HepG2 (cell line): ENCODE measurements at regions of chr10 and their contacts with region 1.

Region 1: GRCh38 chr10:67306588-67307205 is 380.9 kb downstream of the LRRTM3 start:
- DNase-seq: peak; percentile 27
- ATAC-seq: 0 out of 3 replicates have a peak, but pooled peaks have one; percentile 43
- H3K4me3 ChIP-seq: no peak overlapping the region
- H3K27ac ChIP-seq: no peak overlapping the region
- H3K4me1 ChIP-seq: no peaks in the 10 kb centered on the region
- H3K27me3 ChIP-seq: no peaks in the 10 kb centered on the region
- CTCF ChIP-seq: peak; percentile 43
- EP300 ChIP-seq: no peak
- POLR2A ChIP-seq: no peak
- RAD21 ChIP-seq: no peak

Region 2: DNA sequence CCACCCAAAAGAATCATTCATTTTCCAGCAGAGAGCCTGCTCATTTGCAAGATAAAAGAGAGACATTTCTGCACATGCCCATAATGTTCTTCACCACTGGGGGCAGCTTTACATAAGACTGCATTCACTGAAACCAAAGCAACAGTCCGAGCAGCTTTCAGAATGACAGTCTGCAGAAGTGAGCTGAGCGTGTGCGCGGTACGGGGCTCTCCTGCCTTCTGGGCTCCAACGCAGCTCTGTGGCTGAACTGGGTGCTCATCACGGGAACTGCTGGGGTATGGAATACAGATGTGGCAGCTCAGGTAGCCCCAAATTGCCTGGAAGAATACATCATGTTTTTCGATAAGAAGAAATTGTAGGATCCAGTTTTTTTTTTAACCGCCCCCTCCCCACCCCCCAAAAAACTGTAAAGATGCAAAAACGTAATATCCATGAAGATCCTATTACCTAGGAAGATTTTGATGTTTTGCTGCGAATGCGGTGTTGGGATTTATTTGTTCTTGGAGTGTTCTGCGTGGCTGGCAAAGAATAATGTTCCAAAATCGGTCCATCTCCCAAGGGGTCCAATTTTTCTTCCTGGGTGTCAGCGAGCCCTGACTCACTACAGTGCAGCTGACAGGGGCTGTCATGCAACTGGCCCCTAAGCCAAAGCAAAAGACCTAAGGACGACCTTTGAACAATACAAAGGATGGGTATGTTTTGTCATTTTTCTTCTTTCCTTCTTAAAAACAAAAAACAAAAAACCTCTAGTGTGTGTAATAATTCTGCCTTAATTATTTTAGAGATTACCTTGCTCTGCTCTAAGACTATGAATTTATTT is 380.6 kb before region 1 on chr10 and contains the start of gene LRRTM3:
- CTCF ChIA-PET with region 1: no interaction called
- POLR2A ChIA-PET with region 1: no interaction called
- in situ Hi-C with region 1: no loop called
- intact Hi-C with region 1: loop called (anchors 1 kb)
- DNase-seq: peak; percentile 56
- ATAC-seq: peak; percentile 100
- H3K4me3 ChIP-seq: no peak within 1 kb of the TSS
- H3K27ac ChIP-seq: no peak within 1 kb of the TSS
- H3K4me1 ChIP-seq: no peaks in the 10 kb centered on the region
- H3K27me3 ChIP-seq: peaks cover 2 to 10% of the 10 kb centered on the region in 2 experiments; a peak in 2 of 5 replicates
- CTCF ChIP-seq: peak; percentile 49
- EP300 ChIP-seq: no peak
- POLR2A ChIP-seq: no peak
- RAD21 ChIP-seq: no peak
- total RNA-seq, gene LRRTM3: not detected in 2 replicates

Region 3: GRCh38 chr10:67520924-67521520 is 214.3 kb after region 1 on chr10:
- CTCF ChIA-PET with region 1: no interaction called
- POLR2A ChIA-PET with region 1: no interaction called
- in situ Hi-C with region 1: no loop called
- intact Hi-C with region 1: loop called (anchors 1 kb)
- DNase-seq: peak; percentile 38
- ATAC-seq: peak; percentile 92
- H3K4me3 ChIP-seq: no peak overlapping the region
- H3K27ac ChIP-seq: no peak overlapping the region
- H3K4me1 ChIP-seq: no peaks in the 10 kb centered on the region
- H3K27me3 ChIP-seq: no peaks in the 10 kb centered on the region
- CTCF ChIP-seq: peak; percentile 83
- EP300 ChIP-seq: no peak
- POLR2A ChIP-seq: no peak
- RAD21 ChIP-seq: peak; percentile 55; the same call in 1 of the 2 replicates